ENCODE measurements at regions of chr14 and their contacts with region 1.

Region 1: GRCh38 chr14:61103481-61104339 is 122.7 kb downstream of the SLC38A6 start:
- DNase-seq: peak; percentile 85 to 89
- H3K4me3 ChIP-seq: 0 out of 2 replicates have a peak overlapping the region, but pooled peaks have one; percentile 1
- H3K27ac ChIP-seq: peak overlapping the region; percentile 98
- H3K4me1 ChIP-seq: peaks cover 37% of the 10 kb centered on the region
- H3K27me3 ChIP-seq: no peaks in the 10 kb centered on the region
- CTCF ChIP-seq: no peak

Region 2: DNA sequence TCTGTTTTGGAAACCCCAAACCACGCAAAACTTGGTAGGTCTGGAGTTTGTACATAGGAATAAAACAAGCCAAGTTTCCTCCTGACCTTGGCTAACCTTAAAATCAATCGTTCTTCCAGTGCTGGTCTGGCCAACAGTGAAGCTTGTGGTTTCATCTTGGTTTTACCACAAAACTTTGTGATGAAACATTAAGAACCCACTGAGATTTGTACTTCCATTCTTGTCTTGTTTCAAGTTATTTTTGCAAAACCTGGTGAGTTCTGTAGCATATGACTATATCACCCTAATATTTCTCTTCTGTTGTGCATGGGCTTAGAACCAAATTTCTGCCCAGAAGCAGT is 480.8 kb before region 1 on chr14:
- CTCF ChIA-PET with region 1: no interaction called
- POLR2A ChIA-PET with region 1: no interaction called
- intact Hi-C with region 1: loop called (anchors 10 kb)
- DNase-seq: no peak
- H3K4me3 ChIP-seq: no peak overlapping the region
- H3K27ac ChIP-seq: no peak overlapping the region
- H3K4me1 ChIP-seq: no peaks in the 10 kb centered on the region
- H3K27me3 ChIP-seq: no peaks in the 10 kb centered on the region
- CTCF ChIP-seq: no peak

Region 3: GRCh38 chr14:60980811-60981632 is 122.7 kb before region 1 on chr14 and contains the starts of genes SLC38A6 and TRMT5:
- CTCF ChIA-PET with region 1: no interaction called
- POLR2A ChIA-PET with region 1: no interaction called
- intact Hi-C with region 1: loop called (anchors 2 kb)
- DNase-seq: peak; percentile 92 to 95
- H3K4me3 ChIP-seq: peak within 1 kb of the TSS; percentile 99
- H3K27ac ChIP-seq: peak within 1 kb of the TSS; percentile 78
- H3K4me1 ChIP-seq: peaks cover 36% of the 10 kb centered on the region
- H3K27me3 ChIP-seq: no peaks in the 10 kb centered on the region
- CTCF ChIP-seq: no peak
- total RNA-seq, gene SLC38A6: 44.7 and 45.5 TPM in 2 replicates
- total RNA-seq, gene TRMT5: 17.3 and 17.6 TPM in 2 replicates

Region 4: DNA sequence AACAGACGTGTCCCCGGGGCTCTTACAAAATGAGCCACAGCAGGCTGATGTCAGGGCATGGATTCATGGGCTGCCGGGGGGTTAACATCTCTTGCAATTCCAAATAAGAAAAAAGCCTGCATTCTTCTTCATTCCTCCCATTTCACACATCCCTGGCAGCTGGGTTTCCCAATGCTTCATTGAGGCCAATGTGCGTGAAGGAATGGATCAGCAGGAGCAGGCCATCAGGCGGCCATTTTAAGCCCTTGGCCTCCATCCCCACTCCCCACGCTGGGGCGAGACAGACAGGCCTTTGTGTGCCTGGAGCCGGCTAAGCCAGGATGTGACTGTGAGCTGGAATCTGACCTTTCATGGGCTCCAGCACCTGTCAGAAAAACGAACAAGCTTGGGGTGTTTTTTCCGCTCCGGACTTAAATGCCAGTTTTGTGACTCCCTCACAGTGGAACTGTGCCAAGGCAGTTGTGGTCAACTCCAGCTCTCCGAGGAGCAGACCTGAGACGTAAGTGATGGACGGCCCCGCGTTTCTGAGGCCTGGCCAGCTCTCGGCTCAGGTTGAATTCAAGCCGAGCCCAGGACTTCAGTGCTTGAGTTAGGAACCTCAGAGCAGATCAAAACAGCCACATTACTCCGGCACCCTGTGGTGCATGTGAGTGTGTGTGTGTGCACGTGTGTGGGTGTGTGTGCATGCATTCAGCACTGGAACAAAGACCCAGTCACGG is 44.3 kb after region 1 on chr14:
- CTCF ChIA-PET with region 1: no interaction called
- POLR2A ChIA-PET with region 1: no interaction called
- intact Hi-C with region 1: loop called (anchors 1 kb)
- DNase-seq: peak in 1 of 2 experiments; percentile 84
- H3K4me3 ChIP-seq: no peak overlapping the region
- H3K27ac ChIP-seq: no peak overlapping the region
- H3K4me1 ChIP-seq: no peaks in the 10 kb centered on the region
- H3K27me3 ChIP-seq: no peaks in the 10 kb centered on the region
- CTCF ChIP-seq: no peak

Region 5: GRCh38 chr14:61188978-61189808 is 85.5 kb after region 1 on chr14:
- CTCF ChIA-PET with region 1: no interaction called
- POLR2A ChIA-PET with region 1: no interaction called
- intact Hi-C with region 1: loop called (anchors 1 kb)
- DNase-seq: peak; percentile 68 to 84
- H3K4me3 ChIP-seq: peak overlapping the region; percentile 68
- H3K27ac ChIP-seq: no peak overlapping the region
- H3K4me1 ChIP-seq: no peaks in the 10 kb centered on the region; the same call in 1 of the 2 replicates
- H3K27me3 ChIP-seq: no peaks in the 10 kb centered on the region
- CTCF ChIP-seq: peak; percentile 75

Region 6: DNA sequence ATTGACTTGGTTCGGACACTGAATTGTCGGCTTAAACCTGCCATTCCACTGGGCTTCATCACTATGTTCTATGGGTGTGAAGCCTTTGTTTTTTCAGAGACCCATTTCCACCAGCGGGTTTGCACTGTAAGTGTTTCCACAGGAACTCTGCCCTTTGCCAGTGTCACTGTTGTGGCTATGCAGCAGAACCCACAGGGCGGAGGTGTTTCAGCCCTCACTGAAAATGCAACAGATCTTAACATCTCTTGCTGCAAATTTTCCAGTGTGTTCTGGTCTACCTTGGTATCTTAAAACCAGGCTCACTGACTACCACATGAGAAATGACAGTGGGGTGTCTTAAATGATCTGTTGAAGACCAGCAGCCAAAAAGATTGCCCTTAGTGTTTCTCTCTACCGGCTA is 238.8 kb after region 1 on chr14:
- CTCF ChIA-PET with region 1: no interaction called
- POLR2A ChIA-PET with region 1: no interaction called
- intact Hi-C with region 1: no loop called
- DNase-seq: no peak
- H3K4me3 ChIP-seq: no peak overlapping the region
- H3K27ac ChIP-seq: no peak overlapping the region
- H3K4me1 ChIP-seq: peaks cover 30% of the 10 kb centered on the region
- H3K27me3 ChIP-seq: no peaks in the 10 kb centered on the region
- CTCF ChIP-seq: no peak

Region 7: DNA sequence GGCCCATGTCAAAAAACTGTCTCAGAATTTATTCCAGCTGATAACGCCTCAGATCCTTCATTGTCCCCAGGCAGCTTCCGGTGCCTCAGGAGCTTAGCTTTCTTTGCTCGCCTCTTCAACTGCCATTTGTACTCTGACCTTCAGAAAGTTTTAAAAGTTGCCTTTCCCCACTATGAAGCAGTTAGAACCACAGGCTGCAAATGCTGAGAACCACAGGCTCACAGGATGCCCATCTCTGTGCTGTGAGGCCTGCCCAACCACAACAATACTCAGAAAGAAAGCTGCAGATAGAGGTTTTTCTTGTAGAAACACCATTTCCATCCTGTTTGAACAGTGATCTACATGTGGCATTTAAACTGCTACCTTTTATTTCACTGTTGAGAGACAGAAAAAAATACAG is 348.7 kb after region 1 on chr14:
- CTCF ChIA-PET with region 1: no interaction called
- POLR2A ChIA-PET with region 1: no interaction called
- intact Hi-C with region 1: no loop called
- DNase-seq: no peak
- H3K4me3 ChIP-seq: no peak overlapping the region
- H3K27ac ChIP-seq: no peak overlapping the region
- H3K4me1 ChIP-seq: no peaks in the 10 kb centered on the region
- H3K27me3 ChIP-seq: no peaks in the 10 kb centered on the region
- CTCF ChIP-seq: no peak

Measured in PC-9 (cell line).